Activated T-helper 2 cell treated with anti-CD3 and anti-CD28 coated beads, Interferon-gamma antibody, Interleukin-2, Interleukin-4, amounts not matched to agents 10 μg/mL and 5 μg/mL and 100 μg/mL, durations not matched to agents 14 hours and 24 hours and 36 hours (primary cell): ENCODE measurements at regions of chr4 and their contacts with region 1.

Region 1: DNA sequence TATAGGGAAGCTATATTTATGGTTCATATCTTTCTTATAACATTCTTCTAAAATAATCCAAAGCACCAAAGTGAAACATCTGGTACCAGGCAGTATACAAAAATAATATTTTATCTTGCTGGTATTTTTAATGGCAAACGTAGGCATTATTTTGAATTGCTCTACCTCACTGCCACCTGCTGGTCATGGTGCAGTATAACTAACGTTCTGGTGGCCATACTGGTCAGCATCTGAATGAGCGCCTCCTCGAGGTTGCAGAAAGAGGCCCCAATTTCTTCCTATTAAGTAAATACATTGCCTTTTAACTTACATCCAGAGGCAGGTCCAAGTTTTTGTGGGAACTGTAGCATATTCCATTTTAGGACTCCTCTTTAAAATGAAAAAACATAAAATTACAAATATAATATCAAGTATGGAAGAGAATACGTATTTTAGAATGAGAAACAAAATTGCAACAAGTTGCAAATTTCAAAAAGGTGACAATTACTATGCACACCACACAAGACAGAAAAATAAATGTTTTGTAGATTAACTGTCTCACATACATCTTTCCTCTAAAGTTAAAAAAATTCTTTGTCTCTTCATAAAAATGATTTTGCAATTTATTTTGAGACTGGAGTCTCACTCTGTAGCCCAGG is 22.9 kb upstream of the CWH43 start:
- DNase-seq: peak; percentile 60
- H3K4me3 Mint-ChIP-seq: no peak overlapping the region
- H3K27ac Mint-ChIP-seq: no peak overlapping the region
- H3K4me1 Mint-ChIP-seq: no peaks in the 10 kb centered on the region
- H3K27me3 Mint-ChIP-seq: peaks cover 16% of the 10 kb centered on the region

Region 2: DNA sequence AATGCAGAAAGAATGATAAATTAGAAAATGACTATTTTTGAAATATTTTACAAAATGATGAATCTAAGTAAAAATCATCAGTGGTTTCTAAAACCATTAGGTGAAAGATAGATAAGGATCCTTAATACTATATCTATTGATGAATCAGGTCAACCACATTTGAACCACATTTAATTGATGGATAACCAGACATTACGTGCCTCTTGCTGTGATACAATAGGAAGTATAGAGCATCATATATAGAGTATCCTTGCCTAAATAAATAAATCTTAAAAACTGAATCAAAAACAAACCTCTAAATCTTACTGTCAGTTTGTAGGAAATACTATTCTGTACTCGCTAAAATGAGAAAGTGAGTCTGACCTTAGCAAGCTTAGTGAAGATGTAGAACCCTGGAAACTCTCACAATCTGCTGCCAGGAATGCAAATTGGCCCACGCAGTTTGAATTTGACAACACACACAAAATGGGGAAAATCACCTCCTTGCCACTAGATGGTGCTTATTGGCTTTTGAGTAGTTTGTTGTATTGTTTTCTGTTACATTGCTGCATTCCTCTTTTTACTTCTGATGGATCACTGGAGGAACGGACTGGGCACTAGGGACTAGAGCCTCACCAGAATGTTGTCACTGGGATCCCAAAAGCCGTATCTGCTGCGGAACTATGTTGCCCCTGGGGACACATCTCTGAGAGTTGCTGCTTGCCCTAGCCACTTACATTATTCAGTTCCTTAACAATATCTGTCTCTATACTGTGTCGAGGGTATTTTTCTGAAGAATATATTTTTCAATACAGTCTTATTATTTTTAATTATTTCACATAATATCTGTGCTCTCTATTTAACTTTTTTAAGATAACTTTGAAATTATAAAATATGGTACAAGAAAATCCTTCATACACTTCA is 647.2 kb before region 1 on chr4:
- intact Hi-C with region 1: loop called (anchors 2 kb)
- DNase-seq: no peak
- H3K4me3 Mint-ChIP-seq: no peak overlapping the region
- H3K27ac Mint-ChIP-seq: no peak overlapping the region
- H3K4me1 Mint-ChIP-seq: peaks cover 4% of the 10 kb centered on the region
- H3K27me3 Mint-ChIP-seq: peaks cover 2% of the 10 kb centered on the region

Region 3: GRCh38 chr4:48445704-48446103 is 517.5 kb before region 1 on chr4:
- intact Hi-C with region 1: loop called (anchors 5 kb)
- DNase-seq: no peak
- H3K4me3 Mint-ChIP-seq: no peak overlapping the region
- H3K27ac Mint-ChIP-seq: no peak overlapping the region
- H3K4me1 Mint-ChIP-seq: no peaks in the 10 kb centered on the region
- H3K27me3 Mint-ChIP-seq: peaks cover 6% of the 10 kb centered on the region

Region 4: GRCh38 chr4:48578132-48578968 is 384.8 kb before region 1 on chr4:
- intact Hi-C with region 1: loop called (anchors 1 kb)
- DNase-seq: peak; percentile 14
- H3K4me3 Mint-ChIP-seq: no peak overlapping the region
- H3K27ac Mint-ChIP-seq: no peak overlapping the region
- H3K4me1 Mint-ChIP-seq: no peaks in the 10 kb centered on the region
- H3K27me3 Mint-ChIP-seq: no peaks in the 10 kb centered on the region

Region 5: DNA sequence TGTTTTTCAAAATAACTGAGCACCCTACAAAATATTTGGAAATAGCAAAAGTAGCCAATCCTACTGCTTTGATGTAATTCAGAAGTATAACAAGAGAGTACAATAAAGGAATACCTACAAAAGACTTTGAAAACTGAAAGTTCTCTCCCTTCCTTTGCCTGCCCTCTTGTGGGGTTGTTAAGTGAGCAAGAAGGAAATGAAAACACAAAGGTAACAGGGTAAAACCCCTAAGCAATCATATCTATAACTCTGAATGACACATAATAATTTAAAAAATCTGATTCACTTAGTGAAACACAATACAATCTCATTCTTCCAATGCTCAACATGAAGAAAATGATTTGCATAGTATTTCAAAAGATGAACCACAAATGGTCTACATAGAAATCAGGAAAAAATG is 281.3 kb before region 1 on chr4:
- intact Hi-C with region 1: loop called (anchors 5 kb)
- DNase-seq: no peak
- H3K4me3 Mint-ChIP-seq: no peak overlapping the region
- H3K27ac Mint-ChIP-seq: peak overlapping the region; percentile 55
- H3K4me1 Mint-ChIP-seq: peaks cover 24% of the 10 kb centered on the region
- H3K27me3 Mint-ChIP-seq: no peaks in the 10 kb centered on the region

Region 6: DNA sequence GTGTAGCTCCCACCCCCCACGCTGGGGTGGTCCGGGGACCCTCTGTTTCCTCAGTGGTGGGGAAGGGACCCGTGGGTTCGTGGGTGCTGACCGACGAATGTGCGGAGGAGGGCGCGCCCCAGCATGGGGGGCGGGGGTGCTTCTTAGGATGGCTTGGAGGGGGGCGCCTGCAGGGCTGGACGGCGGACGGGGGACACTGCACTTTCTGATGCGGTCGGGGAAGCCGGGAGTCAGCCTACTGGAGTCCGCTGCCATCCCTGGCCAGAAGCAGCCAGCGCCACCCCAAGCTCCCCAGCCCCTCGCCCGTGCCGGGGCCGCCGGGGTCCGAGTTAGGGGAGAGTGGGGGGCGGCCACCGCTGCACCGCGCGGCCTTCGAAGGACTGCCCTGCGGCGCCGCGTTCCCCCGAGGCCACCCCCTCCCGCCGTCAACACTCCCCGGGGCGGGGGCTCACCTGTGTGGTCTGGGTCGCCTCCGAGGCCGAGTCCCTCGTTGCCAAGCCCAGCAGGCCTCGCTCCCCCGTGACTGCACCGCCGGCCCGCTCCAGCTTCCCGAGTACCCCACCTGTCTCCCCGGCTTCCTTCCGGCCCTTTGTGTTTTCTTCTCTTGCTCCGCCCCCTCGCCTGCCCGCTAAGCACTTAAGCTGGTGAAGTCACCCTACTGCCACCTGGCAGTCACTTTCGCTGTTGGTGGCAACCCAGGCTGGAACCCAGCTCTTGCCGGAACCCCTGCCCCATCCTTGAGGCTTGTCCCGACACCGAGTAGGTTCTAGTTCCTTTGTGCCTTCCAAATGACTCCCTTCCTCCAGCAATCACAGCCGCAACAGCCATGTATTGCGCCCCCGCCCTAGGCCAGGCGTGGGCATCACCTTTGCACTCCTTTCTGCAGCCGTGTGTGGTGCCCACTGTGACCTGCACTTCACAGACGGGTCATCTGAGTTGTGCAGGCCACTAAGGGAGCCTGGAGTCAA is 56.7 kb before region 1 on chr4 and contains the start of gene OCIAD2:
- intact Hi-C with region 1: loop called (anchors 2 kb)
- DNase-seq: peak; percentile 71
- H3K4me3 Mint-ChIP-seq: peak within 1 kb of the TSS; percentile 89
- H3K27ac Mint-ChIP-seq: peak within 1 kb of the TSS; percentile 81
- H3K4me1 Mint-ChIP-seq: peaks cover 26% of the 10 kb centered on the region
- H3K27me3 Mint-ChIP-seq: no peaks in the 10 kb centered on the region
- total RNA-seq, gene OCIAD2: 53.5 and 63.0 TPM in 2 replicates